Panc1 (cell line): ENCODE measurements at regions of chr1 and their contacts with region 1.

Region 1: GRCh38 chr1:167364826-167365225 is 144.1 kb downstream of the POU2F1 start:
- DNase-seq: no peak
- ATAC-seq: no peak
- H3K4me3 ChIP-seq: no peak overlapping the region
- H3K27ac ChIP-seq: no peak overlapping the region
- H3K4me1 ChIP-seq: no peaks in the 10 kb centered on the region
- H3K27me3 ChIP-seq: no peaks in the 10 kb centered on the region
- CTCF ChIP-seq: no peak

Region 2: DNA sequence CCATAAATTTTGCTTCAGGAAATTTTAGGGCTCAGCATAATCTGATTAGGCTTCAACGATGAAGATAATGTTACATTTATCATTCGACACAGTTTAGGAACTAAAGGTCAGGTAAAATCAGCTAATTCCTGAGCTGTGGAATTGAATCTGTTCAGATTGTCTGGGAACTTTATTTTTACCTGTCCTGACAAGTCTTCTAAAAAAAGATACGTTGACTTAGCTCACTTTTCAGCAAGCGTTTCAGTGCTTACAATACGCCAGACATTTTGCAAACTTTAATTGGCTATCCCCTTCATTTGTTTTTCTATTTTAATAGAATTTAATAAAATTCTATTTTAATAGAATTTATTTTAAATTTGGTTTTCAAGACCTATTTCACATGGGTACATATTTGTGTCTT is 86.3 kb before region 1 on chr1:
- CTCF ChIA-PET with region 1: no interaction called
- POLR2A ChIA-PET with region 1: interaction called, 10 read pairs
- in situ Hi-C with region 1: no loop called
- intact Hi-C with region 1: no loop called
- DNase-seq: no peak
- ATAC-seq: no peak
- H3K4me3 ChIP-seq: no peak overlapping the region
- H3K27ac ChIP-seq: no peak overlapping the region
- H3K4me1 ChIP-seq: peaks cover 3% of the 10 kb centered on the region
- H3K27me3 ChIP-seq: no peaks in the 10 kb centered on the region
- CTCF ChIP-seq: no peak